Activated B cell treated with CpG ODN at 0.5 μM for 24 hours (primary cell): ENCODE measurements at regions of chr11 and their contacts with region 1.

Region 1: DNA sequence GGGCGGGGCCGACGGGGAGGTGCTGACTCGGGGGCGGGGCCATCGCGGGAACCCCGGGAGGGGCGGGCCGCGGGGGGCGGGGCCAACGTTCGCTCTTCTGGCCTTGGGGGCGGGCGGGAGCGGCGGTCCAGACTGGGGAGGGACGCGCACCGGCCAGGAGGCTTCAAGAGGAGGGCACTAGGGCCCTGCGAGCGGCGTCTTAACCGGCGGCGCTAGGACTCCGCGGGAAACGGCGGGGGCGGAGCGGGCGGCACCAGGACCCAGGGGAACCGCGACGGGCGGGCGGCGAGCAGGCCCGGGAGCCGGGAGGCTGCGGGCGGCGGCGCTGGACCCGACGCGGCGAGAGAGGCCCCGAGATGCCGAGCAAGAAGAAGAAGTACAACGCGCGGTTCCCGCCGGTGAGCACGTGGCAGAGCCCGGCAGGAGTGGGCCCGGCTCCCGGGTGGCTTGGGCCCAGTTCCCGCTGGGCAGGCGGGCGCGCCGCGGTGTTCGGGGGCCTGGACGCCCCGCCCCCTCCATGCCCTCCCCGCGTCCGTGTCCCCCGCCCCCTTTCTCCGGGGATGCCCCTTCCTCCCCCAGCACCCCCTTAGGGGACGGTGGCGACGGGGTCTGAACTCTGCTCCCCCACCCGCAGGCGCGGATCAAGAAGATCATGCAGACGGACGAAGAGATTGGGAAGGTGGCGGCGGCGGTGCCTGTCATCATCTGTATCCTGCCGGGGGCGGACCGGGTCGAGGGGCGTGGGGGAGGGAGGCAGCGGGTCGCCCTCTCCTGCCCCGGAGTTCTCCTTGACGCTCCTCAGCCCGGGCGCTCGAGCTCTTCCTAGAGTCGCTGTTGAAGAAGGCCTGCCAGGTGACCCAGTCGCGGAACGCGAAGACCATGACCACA is at the start of gene DRAP1:
- DNase-seq: peak; percentile 95
- ATAC-seq: peak; percentile 87
- H3K4me3 Mint-ChIP-seq: peak within 1 kb of the TSS; percentile 93
- H3K27ac Mint-ChIP-seq: peak within 1 kb of the TSS; percentile 81
- H3K4me1 Mint-ChIP-seq: peaks cover 53% of the 10 kb centered on the region
- H3K27me3 Mint-ChIP-seq: no peaks in the 10 kb centered on the region
- CTCF ChIP-seq: no peak
- total RNA-seq, gene DRAP1: 64.7 and 75.8 TPM in 2 replicates

Region 2: DNA sequence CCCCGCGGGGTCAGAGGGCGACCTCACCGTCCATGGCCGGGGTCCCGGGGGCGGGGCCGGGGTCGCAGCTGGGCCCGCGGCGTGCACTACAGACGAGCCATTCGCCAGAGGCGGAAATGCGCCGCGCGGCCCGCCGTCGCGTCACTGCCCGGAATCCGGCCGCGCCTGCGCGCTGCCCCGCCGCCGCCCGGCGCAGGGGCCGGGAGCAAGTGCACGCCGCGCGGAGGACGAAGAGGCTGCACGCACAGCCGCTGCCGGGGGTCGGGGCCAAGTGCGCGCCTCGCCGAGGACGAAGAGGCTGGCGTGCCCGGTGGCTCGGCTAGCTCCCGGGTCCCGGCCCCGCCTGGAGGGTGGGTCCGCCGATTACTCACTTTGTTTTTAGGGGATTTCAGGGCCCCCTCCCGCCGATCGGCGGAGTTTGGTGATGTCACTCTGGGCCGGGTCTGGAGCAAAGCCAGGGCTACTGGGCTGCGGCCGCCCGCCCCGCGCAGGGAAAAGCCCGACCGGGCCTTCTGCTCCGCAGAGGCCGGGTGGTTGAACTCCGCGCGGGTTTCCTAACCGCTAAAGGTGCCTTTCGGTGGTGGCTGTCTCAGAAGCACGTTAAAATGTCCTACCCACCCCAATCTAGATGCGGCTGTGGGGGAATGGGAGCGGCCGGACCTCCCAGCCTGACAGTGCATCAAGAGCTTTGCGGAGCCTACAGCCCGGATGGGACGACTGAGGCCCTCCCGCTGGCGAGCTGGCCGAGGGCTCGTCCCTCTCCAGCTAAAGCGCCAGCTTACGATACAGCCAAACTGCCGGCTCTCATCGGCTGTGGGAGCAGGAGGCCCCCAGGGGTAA is 256.4 kb before region 1 on chr11 and contains the start of gene RELA:
- CTCF ChIA-PET with region 1: no interaction called
- POLR2A ChIA-PET with region 1: interaction called, 3 read pairs
- intact Hi-C with region 1: loop called (anchors 1 kb)
- DNase-seq: peak; percentile 91
- ATAC-seq: peak; percentile 87
- H3K4me3 Mint-ChIP-seq: peak within 1 kb of the TSS; percentile 87
- H3K27ac Mint-ChIP-seq: peak within 1 kb of the TSS; percentile 93
- H3K4me1 Mint-ChIP-seq: peaks cover 35% of the 10 kb centered on the region
- H3K27me3 Mint-ChIP-seq: no peaks in the 10 kb centered on the region
- CTCF ChIP-seq: no peak
- total RNA-seq, gene RELA: 110 and 119 TPM in 2 replicates

Region 3: DNA sequence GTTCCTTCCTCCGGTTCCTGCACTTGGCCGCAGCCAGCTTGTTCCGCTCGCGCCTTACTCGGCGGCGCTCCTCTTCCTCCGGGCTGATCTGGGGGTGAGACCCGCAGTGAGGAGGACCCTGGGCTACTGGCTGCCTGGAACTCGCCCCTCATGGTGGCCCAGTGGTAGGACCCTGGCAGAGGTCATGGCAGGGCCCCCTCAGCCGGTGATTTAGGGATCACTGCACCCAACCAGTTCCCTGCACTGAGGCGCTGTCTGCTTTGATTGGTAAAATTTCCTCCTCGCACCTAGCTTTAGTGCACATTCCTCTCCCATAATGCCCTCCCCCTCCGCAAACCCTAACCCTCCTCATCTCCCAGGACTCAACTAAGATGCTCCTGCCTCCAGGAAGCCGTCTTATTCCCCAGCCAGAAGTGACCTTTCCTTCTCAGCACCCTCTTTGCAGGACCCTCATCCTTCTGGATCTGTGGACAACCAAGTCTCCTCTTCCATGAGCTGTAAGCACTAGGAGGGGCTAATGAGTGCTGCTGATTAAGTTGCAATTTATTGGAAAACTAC is 25.3 kb before region 1 on chr11:
- CTCF ChIA-PET with region 1: interaction called, 6 read pairs
- POLR2A ChIA-PET with region 1: interaction called, 55 read pairs
- intact Hi-C with region 1: loop called (anchors 1 kb)
- DNase-seq: no peak
- ATAC-seq: no peak
- H3K4me3 Mint-ChIP-seq: peak overlapping the region; percentile 78
- H3K27ac Mint-ChIP-seq: peak overlapping the region; percentile 86
- H3K4me1 Mint-ChIP-seq: peaks cover 46% of the 10 kb centered on the region
- H3K27me3 Mint-ChIP-seq: no peaks in the 10 kb centered on the region
- CTCF ChIP-seq: no peak

Region 4: DNA sequence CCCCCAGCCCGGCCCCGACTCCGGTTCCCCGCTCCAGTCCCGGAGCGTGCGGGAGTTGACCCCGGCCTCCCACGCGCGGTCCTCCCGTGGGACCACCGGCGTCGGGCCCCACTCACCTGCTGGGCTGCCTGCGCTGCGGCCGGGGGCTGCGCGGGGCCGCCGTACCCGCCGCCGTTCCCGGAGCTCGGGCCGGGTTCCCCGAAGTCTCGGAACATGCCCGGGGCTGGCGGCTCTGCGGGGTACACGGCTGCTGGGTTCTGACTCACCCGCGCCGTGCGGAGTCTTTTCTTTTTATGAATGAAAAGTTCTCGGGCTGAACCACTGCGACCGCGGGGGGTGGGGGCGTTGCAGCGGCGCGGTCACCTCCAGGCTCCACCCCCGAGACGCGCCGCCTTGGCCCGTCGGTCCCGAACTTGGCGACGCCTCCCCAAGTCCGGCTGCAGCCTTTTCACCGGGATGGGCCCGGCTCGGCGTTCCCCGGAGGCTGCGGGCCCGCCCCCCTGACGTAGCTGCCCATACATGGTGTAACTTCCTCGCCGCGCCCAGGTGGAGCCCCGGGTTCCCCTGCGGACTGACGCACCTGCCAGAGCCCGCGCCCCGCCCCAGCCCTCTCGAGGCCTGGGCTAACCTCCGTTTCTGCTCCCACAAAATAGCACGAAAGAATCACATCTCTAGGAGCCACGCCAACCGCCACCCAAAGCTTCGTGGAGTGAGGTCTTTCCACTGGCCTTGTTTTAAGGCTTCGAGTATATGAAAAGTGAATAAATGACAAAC is 19.1 kb before region 1 on chr11 and contains the start of gene FOSL1:
- CTCF ChIA-PET with region 1: no interaction called
- POLR2A ChIA-PET with region 1: interaction called, 17 read pairs
- intact Hi-C with region 1: loop called (anchors 1 kb)
- DNase-seq: peak; percentile 82
- ATAC-seq: peak; percentile 90
- H3K4me3 Mint-ChIP-seq: peak within 1 kb of the TSS; percentile 72
- H3K27ac Mint-ChIP-seq: no peak within 1 kb of the TSS
- H3K4me1 Mint-ChIP-seq: peaks cover 13% of the 10 kb centered on the region
- H3K27me3 Mint-ChIP-seq: peaks cover 2% of the 10 kb centered on the region
- CTCF ChIP-seq: no peak
- total RNA-seq, gene FOSL1: 1.0 and 1.4 TPM in 2 replicates

Region 5: DNA sequence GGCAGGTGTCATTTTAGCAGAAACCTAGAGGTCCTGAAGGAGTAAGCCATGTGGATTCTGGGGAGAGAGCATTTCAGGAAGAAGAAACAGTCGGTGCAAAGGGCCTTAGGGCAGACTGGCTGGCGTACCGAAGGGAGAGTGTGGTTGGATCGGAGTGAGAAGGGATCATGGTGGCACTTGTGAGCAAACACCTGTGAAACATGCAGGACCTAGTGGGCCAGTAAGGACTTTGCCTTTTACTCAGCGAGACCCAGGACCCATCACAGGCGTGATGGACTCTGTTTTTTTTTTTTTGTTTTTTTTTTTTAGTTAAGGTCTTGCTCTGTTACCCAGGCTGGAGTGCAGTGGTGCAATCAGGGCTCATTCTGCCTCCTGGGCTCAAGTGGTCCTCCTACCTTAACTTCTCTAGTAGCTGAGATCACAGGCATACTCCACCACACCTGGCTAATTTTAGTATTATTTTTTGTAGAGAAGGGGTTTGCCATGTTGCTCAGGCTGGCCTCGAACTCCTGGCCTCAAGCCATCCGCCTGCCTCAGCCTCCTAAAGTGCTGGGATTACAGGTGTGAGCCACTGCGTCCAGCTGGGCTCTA is 22.4 kb after region 1 on chr11:
- CTCF ChIA-PET with region 1: no interaction called
- POLR2A ChIA-PET with region 1: no interaction called
- intact Hi-C with region 1: loop called (anchors 2 kb)
- DNase-seq: no peak
- ATAC-seq: no peak
- H3K4me3 Mint-ChIP-seq: no peak overlapping the region
- H3K27ac Mint-ChIP-seq: peak overlapping the region; percentile 30
- H3K4me1 Mint-ChIP-seq: peaks cover 15% of the 10 kb centered on the region
- H3K27me3 Mint-ChIP-seq: peaks cover 3% of the 10 kb centered on the region
- CTCF ChIP-seq: no peak

Region 6: GRCh38 chr11:65961232-65961901 is 42.0 kb after region 1 on chr11 and contains the start of gene SART1:
- CTCF ChIA-PET with region 1: no interaction called
- POLR2A ChIA-PET with region 1: interaction called, 6 read pairs
- intact Hi-C with region 1: loop called (anchors 1 kb)
- DNase-seq: peak; percentile 85
- ATAC-seq: peak; percentile 89
- H3K4me3 Mint-ChIP-seq: peak within 1 kb of the TSS; percentile 97
- H3K27ac Mint-ChIP-seq: peak within 1 kb of the TSS; percentile 95
- H3K4me1 Mint-ChIP-seq: peaks cover 50% of the 10 kb centered on the region
- H3K27me3 Mint-ChIP-seq: no peaks in the 10 kb centered on the region
- CTCF ChIP-seq: no peak
- total RNA-seq, gene SART1: 86.6 and 92.3 TPM in 2 replicates

Region 7: GRCh38 chr11:65972116-65972515 is 52.7 kb after region 1 on chr11:
- CTCF ChIA-PET with region 1: no interaction called
- POLR2A ChIA-PET with region 1: no interaction called
- intact Hi-C with region 1: no loop called
- DNase-seq: no peak
- ATAC-seq: no peak
- H3K4me3 Mint-ChIP-seq: no peak overlapping the region
- H3K27ac Mint-ChIP-seq: no peak overlapping the region
- H3K4me1 Mint-ChIP-seq: no peaks in the 10 kb centered on the region
- H3K27me3 Mint-ChIP-seq: no peaks in the 10 kb centered on the region
- CTCF ChIP-seq: no peak

Region 8: DNA sequence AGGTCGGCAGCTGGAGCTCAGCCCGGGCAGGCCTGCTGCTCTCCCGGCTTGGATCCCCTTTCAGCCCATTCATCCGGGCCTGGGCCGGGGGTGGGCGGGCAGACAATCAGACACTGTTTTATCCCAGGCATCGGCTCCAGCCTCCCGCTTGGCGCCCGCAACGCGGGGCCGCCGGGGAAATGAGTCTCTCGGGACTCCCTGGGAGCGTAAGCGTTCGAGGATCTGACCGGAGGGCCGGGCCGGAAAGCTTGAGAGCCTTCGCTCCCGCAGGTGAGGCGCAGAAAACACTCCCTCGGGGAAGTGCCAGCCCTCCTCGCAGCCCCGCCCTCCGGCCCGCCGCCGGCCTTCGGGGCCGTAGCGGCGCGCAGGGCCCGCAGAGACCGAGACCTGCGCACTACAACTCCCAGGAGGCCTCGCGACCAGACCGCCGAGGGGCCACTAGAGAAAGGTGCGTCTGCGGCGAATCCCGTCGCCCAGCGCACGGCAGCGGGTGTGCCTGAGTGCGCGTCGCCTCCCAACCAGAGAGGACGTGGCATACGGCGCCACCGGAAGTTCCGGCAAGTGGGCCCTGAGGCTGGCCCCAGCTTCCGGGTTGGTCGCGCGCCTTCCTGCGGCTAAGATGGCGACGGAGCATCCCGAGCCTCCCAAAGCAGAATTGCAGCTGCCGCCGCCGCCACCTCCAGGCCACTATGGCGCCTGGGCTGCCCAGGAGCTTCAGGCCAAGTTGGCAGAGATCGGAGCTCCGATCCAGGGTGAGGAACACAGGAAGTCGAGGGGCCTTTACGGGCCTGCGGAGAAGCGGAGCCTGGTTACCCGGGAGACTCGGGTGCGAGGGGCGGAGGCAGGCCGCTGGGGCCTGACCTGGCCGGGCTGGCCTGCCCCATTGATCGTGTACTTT is 132.6 kb after region 1 on chr11 and contains the start of gene SF3B2:
- CTCF ChIA-PET with region 1: no interaction called
- POLR2A ChIA-PET with region 1: interaction called, 6 read pairs
- intact Hi-C with region 1: loop called (anchors 1 kb)
- DNase-seq: peak; percentile 91
- ATAC-seq: peak; percentile 97
- H3K4me3 Mint-ChIP-seq: peak within 1 kb of the TSS; percentile 99
- H3K27ac Mint-ChIP-seq: peak within 1 kb of the TSS; percentile 96
- H3K4me1 Mint-ChIP-seq: peaks cover 27% of the 10 kb centered on the region
- H3K27me3 Mint-ChIP-seq: peaks cover 8% of the 10 kb centered on the region
- CTCF ChIP-seq: no peak
- total RNA-seq, gene SF3B2: 198 and 219 TPM in 2 replicates